ENCODE measurements at regions of chr2 and their contacts with region 1.

Region 1: GRCh38 chr2:237026981-237027711 is 58.5 kb upstream of the COPS8 start:
- DNase-seq: peak; percentile 39 to 63 (median 58)
- H3K4me3 ChIP-seq: no peak overlapping the region
- H3K27ac ChIP-seq: no peak overlapping the region
- H3K4me1 ChIP-seq: no peaks in the 10 kb centered on the region
- H3K27me3 ChIP-seq: peaks cover 0 to 1% (median 0%) of the 10 kb centered on the region in 5 experiments

Region 2: DNA sequence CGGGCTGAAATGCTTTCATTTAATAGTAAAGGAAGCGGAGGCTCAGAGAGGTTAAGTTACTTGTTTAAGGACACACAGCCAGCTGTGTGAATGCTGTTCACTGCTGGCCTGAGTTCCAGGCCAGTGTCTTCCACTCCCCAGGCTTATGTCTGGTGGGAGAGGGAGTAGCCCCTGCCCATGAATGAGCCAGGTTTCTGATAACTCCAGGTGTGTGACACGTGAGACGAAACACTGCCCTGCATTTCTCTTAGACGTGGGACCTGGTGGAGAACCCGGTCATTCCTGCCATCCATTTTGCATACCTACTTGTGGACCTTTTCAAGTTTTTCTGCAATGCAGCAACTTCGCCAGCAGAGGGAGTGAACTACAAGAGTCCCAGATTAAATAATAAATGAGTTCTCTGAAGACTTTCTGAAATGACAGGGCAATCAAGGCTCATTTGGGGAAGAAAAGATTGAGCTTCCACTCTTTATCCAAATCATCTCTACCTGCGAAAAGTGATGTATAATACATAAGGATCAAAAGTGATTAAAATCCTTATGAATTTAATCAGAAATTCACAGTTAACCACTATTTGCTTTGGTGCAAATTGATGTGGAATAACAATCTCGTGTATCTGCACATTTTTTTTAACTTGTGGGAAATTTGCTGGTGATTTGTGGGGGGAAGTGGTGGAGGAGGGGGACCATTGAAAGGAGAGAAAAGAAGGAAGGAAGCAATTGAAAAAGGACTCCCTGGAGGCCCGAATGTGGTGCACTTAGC is 683.6 kb before region 1 on chr2:
- CTCF ChIA-PET with region 1: interaction called, 13 read pairs
- POLR2A ChIA-PET with region 1: no interaction called
- DNase-seq: peak; percentile 70 to 87 (median 84)
- H3K4me3 ChIP-seq: no peak overlapping the region
- H3K27ac ChIP-seq: no peak overlapping the region
- H3K4me1 ChIP-seq: peaks cover 0 to 4% (median 1%) of the 10 kb centered on the region in 4 experiments
- H3K27me3 ChIP-seq: peaks cover 0 to 3% (median 0%) of the 10 kb centered on the region in 5 experiments

Region 3: DNA sequence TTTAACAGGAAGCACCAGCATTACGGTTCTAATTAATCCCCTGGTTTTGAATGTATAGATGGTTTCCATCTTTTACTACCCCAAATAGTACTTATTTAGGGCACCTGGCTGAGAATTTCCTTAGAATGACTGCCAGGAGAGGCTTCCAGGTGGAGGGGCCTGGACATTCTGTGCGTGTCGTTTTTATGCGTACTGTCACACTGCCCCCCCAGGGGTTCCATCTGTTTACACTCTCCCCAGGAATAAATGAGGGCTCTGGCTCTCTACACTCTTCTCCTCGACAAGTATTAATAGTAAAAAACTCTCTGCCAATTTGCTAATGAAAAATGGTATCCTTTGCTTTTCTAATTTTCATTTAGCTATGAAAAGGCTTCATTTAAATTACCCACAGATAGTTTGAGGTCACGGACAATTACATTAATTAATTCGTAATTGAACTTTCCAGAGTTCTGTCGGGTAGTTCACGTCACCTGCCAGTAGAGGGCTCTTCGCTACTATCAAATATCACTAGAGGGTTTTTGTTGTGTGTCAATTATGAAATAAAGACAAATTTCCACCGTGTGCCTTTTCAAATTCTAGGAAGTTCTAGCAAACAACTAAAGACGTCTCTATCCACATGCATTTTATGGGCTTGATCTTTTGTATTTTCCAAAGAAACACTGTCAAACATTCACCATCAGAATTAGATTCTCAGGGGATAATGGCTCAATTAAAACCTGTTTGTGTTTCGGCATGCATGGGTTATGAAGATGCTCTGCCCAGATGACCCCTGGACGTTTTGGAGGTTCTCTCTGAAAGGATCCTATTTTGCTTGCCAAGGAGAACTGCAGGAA is 674.2 kb before region 1 on chr2:
- CTCF ChIA-PET with region 1: interaction called, 28 read pairs
- POLR2A ChIA-PET with region 1: no interaction called
- DNase-seq: peak; percentile 31 to 66 (median 54)
- H3K4me3 ChIP-seq: no peak overlapping the region
- H3K27ac ChIP-seq: no peak overlapping the region
- H3K4me1 ChIP-seq: no peaks in the 10 kb centered on the region
- H3K27me3 ChIP-seq: peaks cover 0 to 7% (median 3%) of the 10 kb centered on the region in 5 experiments

Region 4: GRCh38 chr2:237045432-237045831 is 18.3 kb after region 1 on chr2:
- CTCF ChIA-PET with region 1: no interaction called
- POLR2A ChIA-PET with region 1: no interaction called
- DNase-seq: no peak
- H3K4me3 ChIP-seq: no peak overlapping the region
- H3K27ac ChIP-seq: no peak overlapping the region
- H3K4me1 ChIP-seq: peaks cover 0 to 2% (median 0%) of the 10 kb centered on the region in 4 experiments
- H3K27me3 ChIP-seq: no peaks in the 10 kb centered on the region